Naive thymus-derived CD4-positive, alpha-beta T cell (primary cell): ENCODE measurements at regions of chr4 and their contacts with region 1.

Region 1: GRCh38 chr4:102826890-102827673 is at the start of gene UBE2D3:
- DNase-seq: peak; percentile 92 to 97 (median 95)
- ATAC-seq: peak; percentile 72
- H3K4me3 ChIP-seq: peak within 1 kb of the TSS; percentile 82
- H3K4me3 Mint-ChIP-seq: no peak within 1 kb of the TSS
- H3K27ac ChIP-seq: peak within 1 kb of the TSS; percentile 99
- H3K27ac Mint-ChIP-seq: no peak within 1 kb of the TSS
- H3K4me1 ChIP-seq: peaks cover 19 to 24% of the 10 kb centered on the region in 2 donors
- H3K4me1 Mint-ChIP-seq: peaks cover 24 to 46% (median 40%) of the 10 kb centered on the region in 7 donors
- H3K27me3 ChIP-seq: no peaks in the 10 kb centered on the region
- H3K27me3 Mint-ChIP-seq: peaks cover 0 to 2% (median 0%) of the 10 kb centered on the region in 5 donors
- total RNA-seq, gene UBE2D3: 339 to 556 (median 413) TPM

Region 2: GRCh38 chr4:102344954-102345794 is 481.9 kb before region 1 on chr4 and contains the start of gene SLC39A8:
- CTCF ChIA-PET with region 1: interaction called, 3 read pairs
- POLR2A ChIA-PET with region 1: interaction called, 20 read pairs
- intact Hi-C with region 1: loop called (anchors 1 kb)
- DNase-seq: peak; percentile 75 to 91 (median 89)
- ATAC-seq: peak; percentile 87
- H3K4me3 ChIP-seq: peak within 1 kb of the TSS; percentile 87
- H3K4me3 Mint-ChIP-seq: peak within 1 kb of the TSS; percentile 87 to 97 (median 90)
- H3K27ac ChIP-seq: peak within 1 kb of the TSS; percentile 95
- H3K27ac Mint-ChIP-seq: peak within 1 kb of the TSS; percentile 91 to 98 (median 95)
- H3K4me1 ChIP-seq: peaks cover 15 to 37% of the 10 kb centered on the region in 2 donors
- H3K4me1 Mint-ChIP-seq: peaks cover 24 to 51% (median 46%) of the 10 kb centered on the region in 7 donors
- H3K27me3 ChIP-seq: no peaks in the 10 kb centered on the region
- H3K27me3 Mint-ChIP-seq: peaks cover 0 to 7% (median 0%) of the 10 kb centered on the region in 5 donors
- total RNA-seq, gene SLC39A8: 15.1 to 99.5 (median 17.8) TPM

Region 3: DNA sequence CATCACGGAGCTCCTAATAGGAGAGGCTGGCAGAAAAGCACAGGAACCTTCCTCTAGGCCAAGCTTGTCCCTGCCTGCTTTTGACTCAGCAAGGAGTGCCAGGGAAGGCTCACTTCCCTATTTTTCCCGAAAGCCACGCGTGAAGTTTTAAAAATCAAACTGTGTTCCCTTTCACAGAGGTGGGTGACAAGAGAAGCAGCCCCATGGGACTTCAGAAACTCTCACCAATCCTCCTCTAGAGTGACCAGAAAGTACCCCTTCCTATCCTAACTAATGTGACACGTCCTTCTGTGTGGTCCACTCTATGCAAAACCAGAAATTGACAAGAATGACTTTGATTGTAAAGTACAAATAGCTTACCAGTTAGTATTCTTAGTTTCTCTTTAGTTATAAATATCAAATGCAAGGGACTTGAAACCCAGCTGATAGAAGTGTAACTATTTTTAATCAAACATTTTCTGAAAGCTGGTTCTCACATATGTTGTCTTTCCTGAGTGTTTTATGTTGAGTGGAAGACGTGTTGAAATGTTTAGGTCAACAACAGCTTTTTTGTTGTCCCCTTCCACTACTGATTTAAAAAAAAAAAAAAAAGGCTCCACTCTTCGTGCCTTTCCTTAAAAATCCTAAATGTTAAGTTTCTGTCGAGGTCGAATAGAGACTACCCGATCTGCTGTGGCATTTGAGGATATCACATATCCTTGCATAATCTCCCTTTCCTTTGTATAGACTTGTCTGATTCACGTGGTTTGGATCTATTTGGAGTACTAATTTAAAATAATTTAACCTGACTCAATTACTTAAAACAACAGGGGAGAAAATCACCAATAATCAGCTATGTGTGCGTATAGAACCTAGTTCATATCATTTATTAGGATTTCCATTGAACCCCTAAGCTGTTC is 283.8 kb before region 1 on chr4:
- CTCF ChIA-PET with region 1: no interaction called
- POLR2A ChIA-PET with region 1: no interaction called
- intact Hi-C with region 1: no loop called
- DNase-seq: no peak
- ATAC-seq: no peak
- H3K4me3 ChIP-seq: no peak overlapping the region
- H3K4me3 Mint-ChIP-seq: no peak overlapping the region
- H3K27ac ChIP-seq: no peak overlapping the region
- H3K27ac Mint-ChIP-seq: peak overlapping the region in 3 of 9 donors; percentile 46 to 75 (median 74)
- H3K4me1 ChIP-seq: peaks cover 0 to 4% of the 10 kb centered on the region in 2 donors
- H3K4me1 Mint-ChIP-seq: peaks cover 23 to 67% (median 54%) of the 10 kb centered on the region in 7 donors
- H3K27me3 ChIP-seq: no peaks in the 10 kb centered on the region
- H3K27me3 Mint-ChIP-seq: no peaks in the 10 kb centered on the region

Region 4: GRCh38 chr4:102610007-102610406 is 217.1 kb before region 1 on chr4:
- CTCF ChIA-PET with region 1: no interaction called
- POLR2A ChIA-PET with region 1: interaction called, 10 read pairs
- intact Hi-C with region 1: loop called (anchors 1 to 2 kb)
- DNase-seq: no peak
- ATAC-seq: no peak
- H3K4me3 ChIP-seq: no peak overlapping the region
- H3K4me3 Mint-ChIP-seq: peak overlapping the region in 1 of 10 donors; percentile 5
- H3K27ac ChIP-seq: no peak overlapping the region
- H3K27ac Mint-ChIP-seq: peak overlapping the region; percentile 10 to 97 (median 76)
- H3K4me1 ChIP-seq: peaks cover 38% of the 10 kb centered on the region in 2 donors
- H3K4me1 Mint-ChIP-seq: peaks cover 30 to 85% (median 67%) of the 10 kb centered on the region in 7 donors
- H3K27me3 ChIP-seq: no peaks in the 10 kb centered on the region
- H3K27me3 Mint-ChIP-seq: no peaks in the 10 kb centered on the region

Region 5: GRCh38 chr4:102809190-102809589 is 17.9 kb before region 1 on chr4:
- CTCF ChIA-PET with region 1: interaction called, 6 read pairs
- POLR2A ChIA-PET with region 1: interaction called, 80 read pairs
- intact Hi-C with region 1: loop called (anchors 1 to 2 kb)
- DNase-seq: peak in 4 of 9 donors; percentile 18 to 30 (median 28)
- ATAC-seq: peak; percentile 65
- H3K4me3 ChIP-seq: no peak overlapping the region
- H3K4me3 Mint-ChIP-seq: peak overlapping the region in 8 of 10 donors; percentile 13 to 63 (median 46)
- H3K27ac ChIP-seq: peak overlapping the region; percentile 14
- H3K27ac Mint-ChIP-seq: peak overlapping the region in 8 of 9 donors; percentile 20 to 90 (median 57)
- H3K4me1 ChIP-seq: peaks cover 51 to 59% of the 10 kb centered on the region in 2 donors
- H3K4me1 Mint-ChIP-seq: peaks cover 53 to 93% (median 86%) of the 10 kb centered on the region in 7 donors
- H3K27me3 ChIP-seq: no peaks in the 10 kb centered on the region
- H3K27me3 Mint-ChIP-seq: no peaks in the 10 kb centered on the region

Region 6: DNA sequence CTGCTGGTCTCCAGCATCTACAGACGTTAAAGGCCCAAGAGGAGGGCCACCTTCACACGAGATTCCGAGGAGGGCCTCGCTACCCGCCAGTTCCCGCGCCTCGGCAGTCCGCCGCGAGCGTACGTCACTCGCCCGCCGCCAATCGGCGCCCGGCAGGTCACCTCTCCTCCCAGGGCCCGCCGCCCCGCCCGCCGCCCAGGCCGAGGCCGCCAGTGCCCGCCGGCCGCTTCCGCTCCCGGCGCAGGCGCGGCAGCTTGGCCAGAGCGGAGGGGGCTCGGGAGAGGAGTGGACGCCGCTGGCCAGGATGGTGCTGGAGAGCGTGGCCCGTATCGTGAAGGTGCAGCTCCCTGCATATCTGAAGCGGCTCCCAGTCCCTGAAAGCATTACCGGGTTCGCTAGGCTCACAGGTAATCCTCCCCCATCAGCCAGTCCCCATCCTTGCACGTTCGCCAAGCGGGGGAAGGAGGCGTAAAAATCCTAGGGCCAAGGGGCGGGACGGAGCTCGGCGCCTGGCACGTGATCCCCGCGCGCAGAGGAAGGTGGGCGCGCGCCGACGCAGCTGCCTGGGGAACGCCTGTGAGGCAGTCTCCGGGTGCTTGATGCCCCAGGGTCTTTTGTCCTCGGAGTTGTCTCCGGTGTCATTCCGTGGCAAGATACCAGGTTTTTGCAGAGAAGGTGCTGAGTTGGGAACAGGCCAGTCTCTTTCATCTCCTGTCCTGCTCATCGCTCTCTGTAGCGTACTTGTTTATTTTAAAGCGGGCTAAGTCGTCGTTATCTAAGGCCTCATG is 41.9 kb after region 1 on chr4 and contains the start of gene CISD2:
- CTCF ChIA-PET with region 1: interaction called, 13 read pairs
- POLR2A ChIA-PET with region 1: interaction called, 173 read pairs
- intact Hi-C with region 1: loop called (anchors 1 kb)
- DNase-seq: peak; percentile 87 to 95 (median 92)
- ATAC-seq: peak; percentile 90
- H3K4me3 ChIP-seq: peak within 1 kb of the TSS; percentile 95
- H3K4me3 Mint-ChIP-seq: peak within 1 kb of the TSS; percentile 88 to 100 (median 96)
- H3K27ac ChIP-seq: peak within 1 kb of the TSS; percentile 99
- H3K27ac Mint-ChIP-seq: peak within 1 kb of the TSS; percentile 98 to 100 (median 99)
- H3K4me1 ChIP-seq: peaks cover 16 to 28% of the 10 kb centered on the region in 2 donors
- H3K4me1 Mint-ChIP-seq: peaks cover 32 to 80% (median 71%) of the 10 kb centered on the region in 7 donors
- H3K27me3 ChIP-seq: no peaks in the 10 kb centered on the region
- H3K27me3 Mint-ChIP-seq: no peaks in the 10 kb centered on the region
- total RNA-seq, gene CISD2: 11.4 to 50.3 (median 13.4) TPM

Region 7: DNA sequence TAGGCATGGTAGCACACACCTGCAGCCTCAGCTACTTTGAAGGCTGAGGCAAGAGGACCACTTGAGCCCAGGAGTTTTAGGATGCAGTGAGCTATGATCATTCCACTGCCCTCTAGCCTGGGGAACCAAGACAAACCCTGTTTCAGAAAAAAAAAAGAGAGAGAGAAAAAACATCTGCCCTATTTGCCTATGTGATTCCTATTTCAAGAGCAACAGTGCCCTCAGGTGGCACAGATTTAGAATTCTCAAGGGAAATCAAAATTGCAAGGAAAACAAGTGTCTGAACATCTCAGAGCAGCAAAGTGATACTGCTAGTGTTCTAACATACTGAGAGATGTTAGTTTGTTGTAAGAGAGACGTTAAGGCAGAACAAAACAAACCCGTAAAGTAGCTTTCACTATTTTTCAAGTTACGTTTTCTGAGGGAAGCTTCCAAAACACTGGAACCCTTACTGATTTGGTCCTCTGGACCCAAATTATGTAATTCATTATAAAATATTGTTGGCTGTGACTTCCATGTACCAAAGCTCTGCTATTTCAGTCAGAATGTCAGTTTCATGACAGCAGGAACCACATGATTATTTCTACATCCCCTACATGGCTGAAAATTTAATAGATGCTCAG is 264.6 kb after region 1 on chr4:
- CTCF ChIA-PET with region 1: interaction called, 6 read pairs
- POLR2A ChIA-PET with region 1: interaction called, 4 read pairs
- intact Hi-C with region 1: loop called in 1 of 2 experiments (anchors 1 kb)
- DNase-seq: peak in 7 of 9 donors; percentile 36 to 65 (median 50)
- ATAC-seq: peak; percentile 80
- H3K4me3 ChIP-seq: no peak overlapping the region
- H3K4me3 Mint-ChIP-seq: peak overlapping the region in 1 of 10 donors; percentile 78
- H3K27ac ChIP-seq: no peak overlapping the region
- H3K27ac Mint-ChIP-seq: peak overlapping the region in 3 of 9 donors; percentile 2 to 72 (median 41)
- H3K4me1 ChIP-seq: no peaks in the 10 kb centered on the region
- H3K4me1 Mint-ChIP-seq: peaks cover 0 to 26% (median 20%) of the 10 kb centered on the region in 7 donors
- H3K27me3 ChIP-seq: no peaks in the 10 kb centered on the region
- H3K27me3 Mint-ChIP-seq: no peaks in the 10 kb centered on the region